ENCODE measurements at regions of chr1 and their contacts with region 1.

Region 1: GRCh38 chr1:224513787-224514209 is 79.2 kb upstream of the WDR26 start:
- DNase-seq: peak; percentile 94
- H3K4me3 Mint-ChIP-seq: no peak overlapping the region
- H3K27ac Mint-ChIP-seq: no peak overlapping the region
- H3K4me1 Mint-ChIP-seq: no peaks in the 10 kb centered on the region
- H3K27me3 Mint-ChIP-seq: no peaks in the 10 kb centered on the region
- CTCF ChIP-seq: peak; percentile 94

Region 2: GRCh38 chr1:224644553-224645154 is 130.9 kb after region 1 on chr1:
- CTCF ChIA-PET with region 1: interaction called, 8 read pairs
- intact Hi-C with region 1: loop called (anchors 1 kb)
- DNase-seq: peak; percentile 66
- H3K4me3 Mint-ChIP-seq: no peak overlapping the region
- H3K27ac Mint-ChIP-seq: no peak overlapping the region
- H3K4me1 Mint-ChIP-seq: peaks cover 8% of the 10 kb centered on the region
- H3K27me3 Mint-ChIP-seq: peaks cover 18% of the 10 kb centered on the region
- CTCF ChIP-seq: peak; percentile 95

Region 3: GRCh38 chr1:224851210-224851847 is 337.5 kb after region 1 on chr1:
- CTCF ChIA-PET with region 1: interaction called, 9 read pairs
- intact Hi-C with region 1: loop called (anchors 2 kb)
- DNase-seq: peak; percentile 76
- H3K4me3 Mint-ChIP-seq: no peak overlapping the region
- H3K27ac Mint-ChIP-seq: no peak overlapping the region
- H3K4me1 Mint-ChIP-seq: no peaks in the 10 kb centered on the region
- H3K27me3 Mint-ChIP-seq: peaks cover 42% of the 10 kb centered on the region
- CTCF ChIP-seq: peak; percentile 63

Region 4: DNA sequence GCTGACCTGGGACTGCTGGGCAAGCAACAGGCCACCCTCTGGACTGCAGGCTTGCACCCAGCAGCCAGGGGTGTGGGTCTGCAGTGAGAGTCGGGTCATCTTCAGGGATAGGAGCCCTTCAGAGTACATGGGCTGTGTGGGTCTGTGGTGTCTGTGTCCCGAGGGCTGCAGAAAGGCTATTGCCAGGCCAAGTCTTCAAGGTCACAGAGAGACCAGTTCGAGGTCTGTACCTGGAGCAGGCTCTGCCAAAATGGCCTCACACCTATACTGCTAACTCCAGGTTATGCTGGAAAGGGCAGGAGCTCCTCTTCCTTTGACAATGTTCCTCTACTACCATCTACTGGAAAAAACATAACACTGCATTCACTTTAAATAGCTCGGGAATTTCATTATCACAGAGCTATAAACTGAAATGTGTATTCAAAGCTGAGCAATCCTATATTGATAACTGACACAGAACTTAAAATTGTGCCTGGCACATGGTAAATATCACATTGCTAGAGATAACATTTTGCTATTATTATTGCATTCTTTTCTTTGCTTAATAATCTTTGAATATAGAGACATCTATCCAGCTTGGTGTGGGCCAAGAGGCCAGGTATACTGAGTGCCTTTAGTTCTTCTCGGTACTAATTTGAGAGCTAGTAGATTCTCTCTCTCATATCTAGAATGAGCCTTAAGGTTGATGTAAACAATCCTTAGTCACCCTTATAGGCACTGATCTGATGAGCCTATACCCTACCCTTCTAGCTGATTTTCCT is 408.8 kb after region 1 on chr1:
- CTCF ChIA-PET with region 1: interaction called, 21 read pairs
- intact Hi-C with region 1: loop called (anchors 1 kb)
- DNase-seq: peak; percentile 30
- H3K4me3 Mint-ChIP-seq: no peak overlapping the region
- H3K27ac Mint-ChIP-seq: no peak overlapping the region
- H3K4me1 Mint-ChIP-seq: peaks cover 11% of the 10 kb centered on the region
- H3K27me3 Mint-ChIP-seq: no peaks in the 10 kb centered on the region
- CTCF ChIP-seq: peak; percentile 15

Region 5: GRCh38 chr1:224996266-224996665 is 482.5 kb after region 1 on chr1:
- CTCF ChIA-PET with region 1: no interaction called
- intact Hi-C with region 1: loop called (anchors 10 kb)
- DNase-seq: peak; percentile 16
- H3K4me3 Mint-ChIP-seq: no peak overlapping the region
- H3K27ac Mint-ChIP-seq: peak overlapping the region; percentile 25
- H3K4me1 Mint-ChIP-seq: peaks cover 38% of the 10 kb centered on the region
- H3K27me3 Mint-ChIP-seq: no peaks in the 10 kb centered on the region
- CTCF ChIP-seq: no peak